CD8-positive, alpha-beta T cell (primary cell): ENCODE measurements at regions of chr5 and their contacts with region 1.

Region 1: DNA sequence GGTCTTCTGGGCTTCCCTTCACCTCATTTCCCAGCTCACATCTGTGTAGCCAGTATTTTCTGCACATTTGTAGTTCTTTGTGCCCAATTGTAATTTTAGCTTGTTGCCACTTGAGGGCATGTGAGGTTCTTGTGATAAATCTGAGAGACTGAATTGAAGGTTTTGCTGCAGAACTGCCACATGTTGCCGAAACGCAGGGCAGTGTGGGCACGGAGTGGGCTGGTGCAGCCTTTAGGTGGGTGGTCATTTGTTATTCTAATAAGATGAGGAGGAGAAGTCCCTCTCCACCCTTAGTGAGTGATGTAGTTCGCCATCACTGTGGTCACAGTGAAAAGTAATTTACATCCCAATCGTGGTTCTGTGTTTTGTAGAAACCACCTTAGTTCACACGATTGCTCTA is 21.2 kb downstream of the OTULIN start:
- DNase-seq: peak in 6 of 9 experiments; percentile 31 to 76 (median 56)
- ATAC-seq: peak; percentile 87
- H3K4me3 ChIP-seq: no peak overlapping the region
- H3K4me3 Mint-ChIP-seq: peak overlapping the region; percentile 53
- H3K27ac ChIP-seq: no peak overlapping the region
- H3K27ac Mint-ChIP-seq: peak overlapping the region; percentile 69
- H3K4me1 ChIP-seq: peaks cover 3% of the 10 kb centered on the region
- H3K4me1 Mint-ChIP-seq: peaks cover 13% of the 10 kb centered on the region
- H3K27me3 ChIP-seq: no peaks in the 10 kb centered on the region
- H3K27me3 Mint-ChIP-seq: no peaks in the 10 kb centered on the region
- CTCF ChIP-seq: peak; percentile 75

Region 2: DNA sequence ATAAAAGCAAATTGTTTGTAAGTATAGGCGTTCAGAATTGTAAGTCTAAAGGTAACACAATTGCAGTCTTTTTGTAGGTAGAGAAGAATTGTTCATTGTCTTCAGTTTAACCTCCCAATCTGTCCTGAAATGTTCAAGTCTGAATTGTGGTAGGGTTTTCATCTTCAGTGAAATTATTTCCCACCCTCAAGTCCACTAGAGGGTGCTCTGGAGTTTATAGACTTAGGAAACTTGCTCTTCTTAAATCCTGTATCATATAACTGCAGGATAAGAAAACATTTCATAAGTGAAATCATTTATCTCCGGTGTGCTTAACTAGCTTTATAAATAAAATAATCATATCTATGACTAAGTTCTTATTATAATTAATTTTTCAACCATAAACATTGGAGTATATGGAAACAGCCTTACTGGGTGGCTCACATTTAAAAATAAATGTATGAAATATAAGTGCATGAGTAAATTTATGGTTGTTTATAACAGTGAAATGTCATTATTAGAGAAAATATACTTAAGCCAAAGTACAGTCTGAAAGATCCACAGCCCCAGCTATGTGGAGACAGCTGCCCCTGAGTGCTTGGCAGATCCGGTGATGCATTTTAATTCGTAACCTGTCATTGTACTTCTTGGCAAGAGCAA is 286.6 kb before region 1 on chr5:
- CTCF ChIA-PET with region 1: no interaction called
- POLR2A ChIA-PET with region 1: no interaction called
- intact Hi-C with region 1: no loop called
- DNase-seq: peak in 3 of 9 experiments; percentile 37 to 72 (median 58)
- ATAC-seq: peak; percentile 65
- H3K4me3 ChIP-seq: no peak overlapping the region
- H3K4me3 Mint-ChIP-seq: no peak overlapping the region
- H3K27ac ChIP-seq: no peak overlapping the region
- H3K27ac Mint-ChIP-seq: no peak overlapping the region
- H3K4me1 ChIP-seq: no peaks in the 10 kb centered on the region
- H3K4me1 Mint-ChIP-seq: peaks cover 13% of the 10 kb centered on the region
- H3K27me3 ChIP-seq: no peaks in the 10 kb centered on the region
- H3K27me3 Mint-ChIP-seq: no peaks in the 10 kb centered on the region
- CTCF ChIP-seq: peak; percentile 71

Region 3: GRCh38 chr5:14669975-14670374 is 15.8 kb before region 1 on chr5:
- CTCF ChIA-PET with region 1: interaction called, 18 read pairs
- POLR2A ChIA-PET with region 1: interaction called, 5 read pairs
- intact Hi-C with region 1: no loop called
- DNase-seq: peak in 2 of 9 experiments; percentile 38 to 56
- ATAC-seq: no peak
- H3K4me3 ChIP-seq: no peak overlapping the region
- H3K4me3 Mint-ChIP-seq: peak overlapping the region; percentile 40
- H3K27ac ChIP-seq: no peak overlapping the region
- H3K27ac Mint-ChIP-seq: peak overlapping the region; percentile 34
- H3K4me1 ChIP-seq: peaks cover 81% of the 10 kb centered on the region
- H3K4me1 Mint-ChIP-seq: peaks cover 87% of the 10 kb centered on the region
- H3K27me3 ChIP-seq: no peaks in the 10 kb centered on the region
- H3K27me3 Mint-ChIP-seq: no peaks in the 10 kb centered on the region
- CTCF ChIP-seq: no peak

Region 4: GRCh38 chr5:14706615-14707021 is 20.9 kb after region 1 on chr5:
- CTCF ChIA-PET with region 1: interaction called, 30 read pairs
- POLR2A ChIA-PET with region 1: interaction called, 4 read pairs
- intact Hi-C with region 1: loop called in 1 of 2 experiments (anchors 1 kb)
- DNase-seq: peak in 8 of 9 experiments; percentile 33 to 83 (median 60)
- ATAC-seq: peak; percentile 94
- H3K4me3 ChIP-seq: no peak overlapping the region
- H3K4me3 Mint-ChIP-seq: peak overlapping the region; percentile 76
- H3K27ac ChIP-seq: peak overlapping the region; percentile 46 to 72
- H3K27ac Mint-ChIP-seq: peak overlapping the region; percentile 99
- H3K4me1 ChIP-seq: peaks cover 79% of the 10 kb centered on the region
- H3K4me1 Mint-ChIP-seq: peaks cover 80% of the 10 kb centered on the region
- H3K27me3 ChIP-seq: no peaks in the 10 kb centered on the region
- H3K27me3 Mint-ChIP-seq: no peaks in the 10 kb centered on the region
- CTCF ChIP-seq: no peak

Region 5: DNA sequence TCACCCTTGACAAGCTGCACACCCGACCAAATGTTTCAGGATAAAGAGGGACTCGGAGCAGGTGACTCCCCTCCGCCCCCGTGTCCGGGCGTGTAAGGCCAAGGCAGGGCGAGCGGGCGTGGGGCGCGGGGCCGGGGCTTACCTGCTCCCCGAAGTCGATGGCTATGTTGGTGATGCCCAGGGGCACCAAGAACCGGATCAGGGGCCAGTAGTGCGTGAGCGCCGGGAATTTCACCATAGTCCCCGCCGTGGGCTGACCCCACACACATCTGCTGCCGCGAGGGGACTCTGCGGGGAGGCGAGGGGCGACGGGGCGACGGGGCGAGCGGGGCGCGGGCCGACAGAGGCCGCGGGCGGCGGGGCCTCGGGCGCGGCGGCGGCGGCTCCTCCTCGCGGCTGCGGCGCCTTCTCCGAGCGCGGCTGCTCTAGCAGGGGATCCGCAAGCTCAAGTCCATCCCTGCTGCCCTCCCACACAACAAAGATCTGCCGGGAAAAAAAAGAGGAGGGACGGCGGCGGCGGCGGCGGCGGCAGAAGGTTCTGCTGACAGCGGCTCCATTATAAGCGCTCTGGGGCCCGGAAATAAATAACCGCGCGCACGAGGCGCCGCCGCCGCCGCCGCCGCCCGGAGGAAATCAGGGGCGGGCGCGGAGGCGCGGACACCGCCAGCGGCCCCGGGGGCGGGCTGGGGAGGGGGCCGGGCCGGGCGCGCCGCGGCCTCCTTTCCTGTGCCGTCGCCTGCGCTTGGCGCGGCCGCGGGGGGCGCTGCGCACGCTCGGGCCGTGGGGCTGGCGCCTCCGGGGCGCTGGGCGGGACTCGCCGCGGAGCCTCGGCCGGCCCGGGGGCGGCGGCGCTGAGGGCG is 185.7 kb after region 1 on chr5 and contains the start of gene ANKH:
- CTCF ChIA-PET with region 1: interaction called, 9 read pairs
- POLR2A ChIA-PET with region 1: no interaction called
- intact Hi-C with region 1: loop called in 1 of 2 experiments (anchors 2 kb)
- DNase-seq: peak; percentile 66 to 93 (median 81)
- ATAC-seq: peak; percentile 81
- H3K4me3 ChIP-seq: peak within 1 kb of the TSS; percentile 63 to 78
- H3K4me3 Mint-ChIP-seq: peak within 1 kb of the TSS; percentile 95
- H3K27ac ChIP-seq: peak within 1 kb of the TSS; percentile 63 to 66
- H3K27ac Mint-ChIP-seq: peak within 1 kb of the TSS; percentile 94
- H3K4me1 ChIP-seq: peaks cover 13% of the 10 kb centered on the region
- H3K4me1 Mint-ChIP-seq: peaks cover 38% of the 10 kb centered on the region
- H3K27me3 ChIP-seq: no peaks in the 10 kb centered on the region
- H3K27me3 Mint-ChIP-seq: no peaks in the 10 kb centered on the region
- CTCF ChIP-seq: no peak
- total RNA-seq, gene ANKH: 56.0 to 57.7 TPM

Region 6: GRCh38 chr5:15003511-15003920 is 317.8 kb after region 1 on chr5:
- CTCF ChIA-PET with region 1: interaction called, 43 read pairs
- POLR2A ChIA-PET with region 1: no interaction called
- intact Hi-C with region 1: loop called (anchors 1 to 2 kb)
- DNase-seq: peak; percentile 24 to 82 (median 53)
- ATAC-seq: peak; percentile 99
- H3K4me3 ChIP-seq: no peak overlapping the region
- H3K4me3 Mint-ChIP-seq: no peak overlapping the region
- H3K27ac ChIP-seq: no peak overlapping the region
- H3K27ac Mint-ChIP-seq: no peak overlapping the region
- H3K4me1 ChIP-seq: no peaks in the 10 kb centered on the region
- H3K4me1 Mint-ChIP-seq: no peaks in the 10 kb centered on the region
- H3K27me3 ChIP-seq: no peaks in the 10 kb centered on the region
- H3K27me3 Mint-ChIP-seq: peaks cover 5% of the 10 kb centered on the region
- CTCF ChIP-seq: peak; percentile 78